PC-3 (cell line): ENCODE measurements at regions of chr10 and their contacts with region 1.

Region 1: GRCh38 chr10:57338823-57339558 is 928.7 kb downstream of the IPMK start:
- DNase-seq: peak; percentile 86
- ATAC-seq: peak; percentile 77
- H3K4me3 ChIP-seq: no peak overlapping the region
- H3K27ac ChIP-seq: no peak overlapping the region
- H3K4me1 ChIP-seq: no peaks in the 10 kb centered on the region
- H3K27me3 ChIP-seq: no peaks in the 10 kb centered on the region
- CTCF ChIP-seq: peak; percentile 91

Region 2: GRCh38 chr10:57593983-57594573 is 255.1 kb after region 1 on chr10:
- CTCF ChIA-PET with region 1: no interaction called
- POLR2A ChIA-PET with region 1: no interaction called
- intact Hi-C with region 1: loop called (anchors 1 kb)
- DNase-seq: peak; percentile 28
- ATAC-seq: no peak
- H3K4me3 ChIP-seq: no peak overlapping the region
- H3K27ac ChIP-seq: no peak overlapping the region
- H3K4me1 ChIP-seq: peaks cover 3% of the 10 kb centered on the region
- H3K27me3 ChIP-seq: peaks cover 6% of the 10 kb centered on the region; the same call in 1 of the 2 replicates
- CTCF ChIP-seq: peak; percentile 48

Region 3: DNA sequence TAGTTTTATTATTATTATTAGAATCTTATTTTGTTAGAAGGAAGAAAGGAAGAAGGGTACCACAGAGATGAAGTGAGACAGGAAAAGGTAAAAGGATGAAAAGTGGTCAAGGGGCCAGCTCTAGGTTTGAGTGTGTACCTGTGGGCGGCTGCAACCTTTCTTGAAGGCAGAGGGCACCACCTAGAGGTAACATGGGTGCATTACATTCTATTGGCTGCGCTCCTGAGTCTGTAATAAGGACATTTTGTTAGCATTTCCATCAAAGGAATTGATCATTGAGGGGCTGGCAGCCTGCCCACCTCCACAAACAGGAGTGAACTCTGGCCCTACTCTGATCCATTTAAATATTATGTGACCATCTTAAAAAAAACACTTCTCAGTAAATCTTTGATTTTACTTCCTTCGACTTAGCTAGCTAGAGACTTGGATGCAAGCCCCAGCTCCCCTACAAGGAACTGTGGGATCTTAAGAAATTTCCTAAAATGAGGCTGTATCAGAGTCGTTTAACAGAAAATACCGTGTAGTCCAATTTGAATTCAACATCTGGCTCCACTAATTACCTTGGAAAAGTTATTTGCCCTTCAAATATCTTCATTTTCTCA is 318.3 kb after region 1 on chr10:
- CTCF ChIA-PET with region 1: no interaction called
- POLR2A ChIA-PET with region 1: no interaction called
- intact Hi-C with region 1: loop called (anchors 1 kb)
- DNase-seq: peak; percentile 89
- ATAC-seq: peak; percentile 95
- H3K4me3 ChIP-seq: no peak overlapping the region
- H3K27ac ChIP-seq: no peak overlapping the region
- H3K4me1 ChIP-seq: no peaks in the 10 kb centered on the region
- H3K27me3 ChIP-seq: no peaks in the 10 kb centered on the region
- CTCF ChIP-seq: peak; percentile 93